MCF 10A (cell line): ENCODE measurements at regions of chr12 and their contacts with region 1.

Region 1: GRCh38 chr12:65411171-65411570 is 132.7 kb downstream of the MSRB3 start:
- DNase-seq: no peak
- H3K4me3 Mint-ChIP-seq: no peak overlapping the region
- H3K27ac Mint-ChIP-seq: no peak overlapping the region
- H3K4me1 Mint-ChIP-seq: peaks cover 9% of the 10 kb centered on the region
- H3K27me3 Mint-ChIP-seq: no peaks in the 10 kb centered on the region
- CTCF ChIP-seq: no peak

Region 2: GRCh38 chr12:65313719-65314317 is 97.4 kb before region 1 on chr12:
- CTCF ChIA-PET with region 1: no interaction called
- POLR2A ChIA-PET with region 1: no interaction called
- intact Hi-C with region 1: no loop called
- DNase-seq: peak; percentile 52
- H3K4me3 Mint-ChIP-seq: no peak overlapping the region
- H3K27ac Mint-ChIP-seq: no peak overlapping the region
- H3K4me1 Mint-ChIP-seq: peaks cover 12% of the 10 kb centered on the region
- H3K27me3 Mint-ChIP-seq: no peaks in the 10 kb centered on the region
- CTCF ChIP-seq: peak; percentile 66

Region 3: GRCh38 chr12:65500091-65500900 is 89.1 kb after region 1 on chr12:
- CTCF ChIA-PET with region 1: no interaction called
- POLR2A ChIA-PET with region 1: no interaction called
- intact Hi-C with region 1: no loop called
- DNase-seq: no peak
- H3K4me3 Mint-ChIP-seq: no peak overlapping the region
- H3K27ac Mint-ChIP-seq: no peak overlapping the region
- H3K4me1 Mint-ChIP-seq: peaks cover 2% of the 10 kb centered on the region
- H3K27me3 Mint-ChIP-seq: no peaks in the 10 kb centered on the region
- CTCF ChIP-seq: no peak

Region 4: GRCh38 chr12:65522956-65523860 is 112.0 kb after region 1 on chr12:
- CTCF ChIA-PET with region 1: interaction called, 10 read pairs
- POLR2A ChIA-PET with region 1: no interaction called
- intact Hi-C with region 1: no loop called
- DNase-seq: no peak
- H3K4me3 Mint-ChIP-seq: no peak overlapping the region
- H3K27ac Mint-ChIP-seq: no peak overlapping the region
- H3K4me1 Mint-ChIP-seq: peaks cover 30% of the 10 kb centered on the region
- H3K27me3 Mint-ChIP-seq: no peaks in the 10 kb centered on the region
- CTCF ChIP-seq: no peak